Activated T-helper 1 cell treated with anti-CD3 and anti-CD28 coated beads, Interleukin-12 subunit alpha, Interleukin-12 subunit beta, Interleukin-2, Interleukin-4 antibody, amounts not matched to agents 30 ng/mL and 10 ng/mL and 1 ng/mL, durations not matched to agents 14 hours and 24 hours and 36 hours (primary cell): ENCODE measurements at regions of chr3 and their contacts with region 1.

Region 1: DNA sequence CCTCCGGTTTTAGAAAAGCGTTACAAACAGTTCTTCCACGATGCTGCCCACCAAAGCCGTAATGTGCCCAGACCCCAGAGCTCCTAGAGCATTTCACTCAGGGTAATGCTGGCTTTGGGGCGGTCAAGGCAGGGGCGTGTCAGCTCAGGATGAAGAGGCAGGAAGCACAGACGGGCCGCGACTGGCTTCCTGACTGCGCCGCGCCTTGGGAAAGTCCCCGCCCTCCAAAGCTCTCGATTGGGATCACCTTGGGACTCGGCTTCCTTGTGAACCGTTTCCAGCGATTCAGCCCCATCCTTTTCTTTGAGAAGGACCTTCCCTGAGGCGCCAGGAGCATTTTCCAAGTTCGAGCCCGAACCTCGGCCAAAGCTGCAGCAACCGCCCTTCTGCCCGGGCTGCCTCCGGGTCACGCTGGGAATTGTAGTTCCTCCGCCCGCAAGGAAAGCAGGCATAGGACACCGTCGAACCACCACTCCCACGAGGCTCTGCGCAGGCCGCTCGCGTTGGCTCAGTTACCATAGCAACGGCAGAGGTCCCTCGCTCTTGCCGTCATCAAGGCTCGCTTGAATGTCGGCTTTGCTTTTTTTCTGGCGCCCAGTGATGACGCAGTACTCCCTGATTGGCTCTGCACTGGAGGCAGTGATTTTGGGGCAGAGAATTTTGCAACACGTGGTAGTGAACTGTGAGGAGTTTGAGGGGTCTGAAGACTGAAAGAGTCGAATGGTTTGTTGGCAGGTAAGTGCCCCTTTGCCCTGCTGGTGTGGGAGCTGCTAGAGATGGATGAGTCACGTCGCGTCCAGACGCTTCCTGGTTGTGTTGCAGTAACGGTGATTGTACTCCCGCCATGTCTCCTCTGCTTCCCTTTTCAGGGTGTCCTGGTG is at the starts of genes CCDC191 and QTRT2:
- DNase-seq: peak; percentile 98
- H3K4me3 Mint-ChIP-seq: peak within 1 kb of the TSS; percentile 98
- H3K27ac Mint-ChIP-seq: peak within 1 kb of the TSS; percentile 97
- H3K4me1 Mint-ChIP-seq: peaks cover 53% of the 10 kb centered on the region
- H3K27me3 Mint-ChIP-seq: peaks cover 2% of the 10 kb centered on the region
- total RNA-seq, gene CCDC191: 1.1 and 2.1 TPM in 2 replicates
- total RNA-seq, gene QTRT2: 54.9 and 57.6 TPM in 2 replicates

Region 2: DNA sequence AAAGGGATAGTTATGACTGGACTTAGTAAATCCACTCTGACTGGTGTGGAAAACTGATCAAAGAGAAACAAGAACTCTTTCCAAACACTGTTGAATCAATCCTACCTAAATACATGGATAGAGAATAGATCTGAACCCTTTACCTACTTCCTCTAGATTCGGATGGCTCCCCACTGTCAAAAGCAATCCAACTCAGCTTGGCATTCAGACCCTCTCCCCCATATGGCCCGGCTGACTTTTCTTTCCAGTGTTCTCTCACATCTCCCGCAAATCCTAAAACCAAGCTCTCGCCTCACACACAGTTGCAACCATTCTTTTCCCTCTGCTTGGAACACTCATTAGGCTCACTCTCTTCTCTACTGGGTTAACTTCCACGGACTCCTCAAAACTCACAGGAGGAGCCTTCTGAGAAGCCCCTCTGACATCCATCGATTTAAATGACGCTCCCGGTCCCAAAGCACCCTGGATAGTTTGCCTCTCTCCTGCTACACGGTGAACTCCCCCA is 542.1 kb before region 1 on chr3:
- intact Hi-C with region 1: loop called (anchors 5 kb)
- DNase-seq: no peak
- H3K4me3 Mint-ChIP-seq: no peak overlapping the region
- H3K27ac Mint-ChIP-seq: no peak overlapping the region
- H3K4me1 Mint-ChIP-seq: peaks cover 7% of the 10 kb centered on the region
- H3K27me3 Mint-ChIP-seq: peaks cover 24% of the 10 kb centered on the region

Region 3: GRCh38 chr3:113736548-113737089 is 319.8 kb before region 1 on chr3:
- intact Hi-C with region 1: loop called (anchors 1 kb)
- DNase-seq: peak; percentile 12
- H3K4me3 Mint-ChIP-seq: no peak overlapping the region
- H3K27ac Mint-ChIP-seq: no peak overlapping the region
- H3K4me1 Mint-ChIP-seq: peaks cover 19% of the 10 kb centered on the region
- H3K27me3 Mint-ChIP-seq: no peaks in the 10 kb centered on the region

Region 4: DNA sequence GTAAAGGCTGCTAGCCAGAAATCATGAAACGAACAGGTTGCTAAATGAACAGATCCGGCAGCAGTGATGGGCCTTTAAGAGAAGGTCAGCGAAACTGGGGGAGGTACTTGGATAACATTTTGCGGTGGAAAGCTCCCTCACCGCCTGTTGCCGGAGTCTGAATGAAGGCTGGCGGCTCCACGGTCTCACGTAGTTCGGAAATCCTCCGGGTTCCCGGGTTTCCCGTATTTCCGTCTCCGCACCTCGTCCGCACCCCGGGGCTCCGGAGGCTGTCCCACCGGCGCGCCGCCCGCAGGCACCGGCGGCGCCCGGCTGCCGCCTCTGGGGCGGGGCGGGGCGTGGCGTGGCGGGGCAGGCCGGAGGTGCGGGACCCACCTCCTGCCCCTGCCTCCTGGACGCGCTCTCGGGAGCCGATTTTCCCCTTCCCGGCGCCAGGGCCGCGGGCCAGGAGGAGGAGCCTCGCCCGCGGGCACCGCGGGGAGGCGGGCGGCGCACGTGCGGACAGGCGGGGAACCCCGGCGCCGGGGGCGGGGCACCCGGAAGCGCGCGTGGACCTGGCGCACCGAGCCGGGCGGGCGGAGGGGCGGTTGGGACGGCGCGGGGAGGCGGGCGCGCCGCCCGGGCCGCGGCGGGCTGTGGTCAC is 108.9 kb before region 1 on chr3 and contains the start of gene ZDHHC23:
- intact Hi-C with region 1: loop called (anchors 1 kb)
- DNase-seq: peak; percentile 66
- H3K4me3 Mint-ChIP-seq: peak within 1 kb of the TSS; percentile 85
- H3K27ac Mint-ChIP-seq: peak within 1 kb of the TSS; percentile 79
- H3K4me1 Mint-ChIP-seq: no peaks in the 10 kb centered on the region
- H3K27me3 Mint-ChIP-seq: peaks cover 41% of the 10 kb centered on the region
- total RNA-seq, gene ZDHHC23: 0.88 and 1.8 TPM in 2 replicates

Region 5: GRCh38 chr3:114290911-114291901 is 234.8 kb after region 1 on chr3:
- intact Hi-C with region 1: loop called (anchors 1 kb)
- DNase-seq: peak; percentile 57
- H3K4me3 Mint-ChIP-seq: no peak overlapping the region
- H3K27ac Mint-ChIP-seq: peak overlapping the region; percentile 68
- H3K4me1 Mint-ChIP-seq: peaks cover 18% of the 10 kb centered on the region
- H3K27me3 Mint-ChIP-seq: no peaks in the 10 kb centered on the region

Region 6: DNA sequence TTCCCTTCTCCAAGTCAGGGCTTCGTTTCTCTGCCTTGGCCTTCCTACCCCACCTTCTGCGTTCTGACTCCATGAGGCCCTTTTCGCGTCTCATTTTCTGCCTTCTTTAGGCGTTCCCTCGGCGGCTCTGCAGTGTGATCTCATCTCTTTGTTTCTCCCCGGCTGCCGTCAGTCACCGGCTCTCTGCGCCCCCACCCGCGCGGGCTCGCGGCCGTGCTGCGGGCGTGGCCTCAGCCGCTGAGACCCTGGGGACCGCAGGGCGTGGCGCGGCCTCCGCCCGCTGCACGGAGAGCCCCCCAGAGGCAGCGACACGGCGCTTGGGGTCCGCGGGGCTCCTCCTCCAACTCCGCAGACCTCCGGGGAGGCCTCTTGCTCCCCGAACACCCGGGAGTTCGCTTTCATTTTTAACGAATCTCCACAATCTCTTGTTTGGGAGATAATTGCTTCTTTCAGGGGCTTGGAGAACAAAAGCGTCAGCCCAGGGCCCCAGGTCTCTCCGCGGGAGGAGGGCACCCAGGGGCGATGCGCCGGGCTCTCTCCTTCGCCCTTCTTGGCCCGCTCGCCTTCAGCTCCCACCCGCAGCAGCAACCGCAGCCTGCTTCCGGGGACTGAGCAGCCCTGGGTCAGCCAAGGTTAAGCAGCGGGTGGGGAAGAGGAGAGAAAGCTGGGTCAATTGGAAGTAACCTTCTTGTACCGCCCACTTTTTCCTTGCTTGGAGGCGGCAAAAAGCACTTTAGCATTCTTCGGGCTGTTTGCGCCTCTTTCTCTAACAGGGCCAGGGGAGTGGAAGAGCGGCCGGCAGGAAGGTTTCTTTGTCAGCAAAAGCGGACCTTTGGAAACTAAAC is 1602.2 kb after region 1 on chr3:
- intact Hi-C with region 1: loop called (anchors 1 kb)
- DNase-seq: peak; percentile 69
- H3K4me3 Mint-ChIP-seq: peak overlapping the region; percentile 86
- H3K27ac Mint-ChIP-seq: peak overlapping the region; percentile 90
- H3K4me1 Mint-ChIP-seq: peaks cover 32% of the 10 kb centered on the region
- H3K27me3 Mint-ChIP-seq: peaks cover 9% of the 10 kb centered on the region